PC-3 (cell line): ENCODE measurements at regions of chr13 and their contacts with region 1.

Region 1: GRCh38 chr13:84574851-84575250 is 692.6 kb upstream of the SLITRK1 start:
- DNase-seq: peak; percentile 36
- ATAC-seq: peak; percentile 50
- H3K4me3 ChIP-seq: no peak overlapping the region
- H3K27ac ChIP-seq: no peak overlapping the region
- H3K4me1 ChIP-seq: no peaks in the 10 kb centered on the region
- H3K27me3 ChIP-seq: no peaks in the 10 kb centered on the region
- CTCF ChIP-seq: peak; percentile 48

Region 2: DNA sequence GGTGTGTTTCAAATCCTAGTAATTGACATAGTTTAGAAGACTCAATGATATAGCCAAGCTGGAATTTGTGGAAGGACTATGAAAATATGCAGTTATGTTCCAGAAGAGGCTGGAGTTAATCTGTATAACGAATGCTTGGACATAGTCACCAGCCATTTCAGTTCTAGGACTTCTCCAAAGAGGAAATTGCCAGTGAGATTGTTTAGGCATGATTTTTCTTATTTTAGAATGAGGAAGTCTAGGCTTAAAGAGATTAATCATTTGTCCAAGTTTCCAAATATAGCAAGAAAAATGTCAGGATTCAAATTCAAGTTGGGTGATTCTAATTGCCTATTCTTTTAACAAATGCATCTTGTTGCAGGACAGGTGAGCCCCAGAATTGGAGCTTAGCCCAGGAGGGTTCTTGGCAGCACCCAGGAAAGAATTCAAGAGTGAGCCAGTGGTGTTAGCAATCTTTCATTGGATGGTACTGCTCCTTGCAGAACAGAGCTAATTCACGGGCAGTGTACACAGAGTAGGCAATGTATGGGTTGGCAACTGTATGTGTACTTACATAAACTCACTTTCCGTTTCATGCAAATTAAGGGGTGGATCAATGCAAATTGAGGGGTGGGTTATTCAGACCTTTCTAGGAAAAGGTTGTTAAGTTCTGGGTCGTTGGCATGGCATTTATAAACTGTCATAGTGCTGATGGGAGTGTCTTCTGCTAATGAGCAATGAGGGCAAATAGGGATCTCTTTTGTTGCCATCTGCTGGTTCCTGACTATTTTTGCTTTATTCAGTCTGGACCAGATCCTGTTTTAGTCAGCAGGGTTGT is 70.6 kb after region 1 on chr13:
- CTCF ChIA-PET with region 1: no interaction called
- POLR2A ChIA-PET with region 1: no interaction called
- intact Hi-C with region 1: loop called (anchors 10 kb)
- DNase-seq: no peak
- ATAC-seq: 0 out of 2 replicates have a peak, but pooled peaks have one; percentile 27
- H3K4me3 ChIP-seq: no peak overlapping the region
- H3K27ac ChIP-seq: no peak overlapping the region
- H3K4me1 ChIP-seq: peaks cover 7% of the 10 kb centered on the region; the same call in 1 of the 2 replicates
- H3K27me3 ChIP-seq: no peaks in the 10 kb centered on the region
- CTCF ChIP-seq: 0 out of 2 replicates have a peak, but pooled peaks have one; percentile 15